Mammary epithelial cell (primary cell): ENCODE measurements at regions of chr2 and their contacts with region 1.

Region 1: GRCh38 chr2:186503848-186504606 is 18.0 kb downstream of the ZC3H15 start:
- DNase-seq: peak; percentile 17
- H3K4me3 ChIP-seq: no peak overlapping the region
- H3K27ac ChIP-seq: no peak overlapping the region
- H3K4me1 ChIP-seq: no peaks in the 10 kb centered on the region
- H3K27me3 ChIP-seq: no peaks in the 10 kb centered on the region
- CTCF ChIP-seq: peak; percentile 42 to 47

Region 2: DNA sequence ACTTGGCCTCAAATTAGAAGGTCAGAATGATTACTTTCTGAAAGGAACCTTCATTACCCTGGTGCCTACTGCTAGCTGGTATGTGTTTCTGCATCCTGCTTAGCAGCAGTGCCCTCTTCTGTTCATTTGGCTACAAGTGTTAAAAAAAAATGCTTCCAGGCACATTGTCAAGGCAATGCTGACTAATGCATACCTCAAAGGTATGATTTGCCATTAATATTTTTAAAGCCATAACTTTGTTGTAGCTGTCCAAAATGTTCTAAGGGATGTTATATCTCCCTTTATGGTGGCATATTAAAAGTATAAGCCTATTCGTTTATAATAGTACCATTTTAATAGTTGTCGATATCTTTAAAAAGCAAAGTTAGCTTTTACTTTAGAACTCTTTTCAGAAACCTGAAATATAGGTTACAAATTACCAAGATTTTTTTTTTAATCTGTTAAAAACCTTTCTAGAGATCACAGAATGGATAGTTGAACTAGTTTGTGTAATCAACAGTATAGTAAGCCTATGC is 137.8 kb after region 1 on chr2:
- CTCF ChIA-PET with region 1: interaction called, 3 read pairs
- dilution Hi-C with region 1: loop called (anchors 5 kb)
- in situ Hi-C with region 1: loop called (anchors 5 to 10 kb)
- intact Hi-C with region 1: loop called (anchors 1 kb)
- DNase-seq: peak; percentile 74
- H3K4me3 ChIP-seq: no peak overlapping the region
- H3K27ac ChIP-seq: no peak overlapping the region
- H3K4me1 ChIP-seq: no peaks in the 10 kb centered on the region
- H3K27me3 ChIP-seq: no peaks in the 10 kb centered on the region
- CTCF ChIP-seq: peak; percentile 75 to 87

Region 3: DNA sequence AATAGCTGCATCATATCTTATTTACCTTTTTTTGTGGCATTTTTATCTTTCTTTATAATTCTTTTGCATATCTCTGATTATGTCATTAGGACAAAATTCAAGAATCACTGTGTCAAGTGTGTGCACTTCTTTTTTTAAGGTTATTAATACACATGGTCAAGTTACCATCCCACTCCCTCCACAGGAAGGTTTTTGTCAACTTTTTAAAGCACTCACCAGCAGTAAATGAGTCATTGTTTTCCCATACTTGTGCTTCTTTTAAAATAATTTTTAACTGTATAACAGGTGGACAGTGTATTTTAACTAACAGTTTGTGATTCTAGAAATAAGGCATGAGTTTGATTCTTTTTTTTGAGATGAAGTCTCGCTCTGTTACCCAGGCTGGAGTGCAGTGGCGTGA is 144.1 kb after region 1 on chr2:
- CTCF ChIA-PET with region 1: no interaction called
- dilution Hi-C with region 1: loop called (anchors 5 kb)
- in situ Hi-C with region 1: loop called (anchors 5 to 10 kb)
- intact Hi-C with region 1: no loop called
- DNase-seq: no peak
- H3K4me3 ChIP-seq: no peak overlapping the region
- H3K27ac ChIP-seq: no peak overlapping the region
- H3K4me1 ChIP-seq: no peaks in the 10 kb centered on the region
- H3K27me3 ChIP-seq: no peaks in the 10 kb centered on the region
- CTCF ChIP-seq: no peak

Region 4: GRCh38 chr2:186780701-186781348 is 276.8 kb after region 1 on chr2:
- CTCF ChIA-PET with region 1: no interaction called
- dilution Hi-C with region 1: no loop called
- in situ Hi-C with region 1: no loop called
- intact Hi-C with region 1: loop called (anchors 1 kb)
- DNase-seq: peak; percentile 57
- H3K4me3 ChIP-seq: no peak overlapping the region
- H3K27ac ChIP-seq: no peak overlapping the region
- H3K4me1 ChIP-seq: no peaks in the 10 kb centered on the region
- H3K27me3 ChIP-seq: no peaks in the 10 kb centered on the region
- CTCF ChIP-seq: peak; percentile 27 to 41